ENCODE measurements at regions of chr19 and their contacts with region 1.

Region 1: GRCh38 chr19:56252699-56253422 is 19.7 kb upstream of the EDDM13 start:
- DNase-seq: peak; percentile 73 to 98
- H3K4me3 ChIP-seq: no peak overlapping the region; a peak in 1 of 8 replicates
- H3K27ac ChIP-seq: no peak overlapping the region
- H3K4me1 ChIP-seq: no peaks in the 10 kb centered on the region
- H3K27me3 ChIP-seq: no peaks in the 10 kb centered on the region; a peak in 1 of 7 replicates
- CTCF ChIP-seq: peak; percentile 90 to 97 (median 97)
- EP300 ChIP-seq: no peak
- POLR2A ChIP-seq: no peak
- RAD21 ChIP-seq: peak; percentile 79 to 81

Region 2: DNA sequence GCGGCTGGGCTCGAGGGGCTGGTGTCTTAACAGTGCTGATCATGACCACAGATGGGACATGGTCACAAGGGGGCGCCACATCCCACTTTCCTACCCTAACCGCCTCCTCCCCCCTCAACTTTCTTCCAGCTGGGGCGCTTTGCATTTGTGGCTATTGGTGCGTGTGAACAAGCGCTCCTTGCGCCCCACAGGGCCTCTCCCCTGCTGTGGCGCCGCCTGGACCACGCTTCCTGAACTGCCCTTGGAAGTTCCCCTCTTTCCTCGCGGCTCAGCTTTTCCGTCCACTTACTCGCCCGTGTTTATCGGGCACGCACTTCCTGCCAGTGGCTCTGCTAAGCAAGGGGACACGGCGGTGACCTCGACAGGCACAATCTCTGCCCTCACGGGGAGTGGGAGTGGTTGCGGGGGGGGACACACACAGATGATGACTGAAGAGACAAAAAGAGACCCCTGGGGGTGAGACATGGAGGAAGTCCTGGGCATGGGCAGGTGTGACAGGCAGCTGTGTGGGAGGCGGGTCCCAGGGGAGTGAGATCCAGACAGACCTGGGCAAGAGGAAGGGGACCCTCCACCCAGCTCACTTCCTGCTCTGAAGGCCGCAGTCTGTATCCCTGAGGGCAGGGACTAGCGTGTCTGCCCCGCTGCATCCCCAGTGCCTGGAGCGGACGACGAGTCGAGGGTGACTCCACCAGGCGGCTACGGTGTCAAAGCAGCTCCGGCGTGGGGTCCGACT is 172.0 kb before region 1 on chr19:
- CTCF ChIA-PET with region 1: interaction called, 11 read pairs
- POLR2A ChIA-PET with region 1: no interaction called
- DNase-seq: peak in 1 of 2 experiments; percentile 94
- H3K4me3 ChIP-seq: peak overlapping the region; percentile 38 to 74 (median 46); a peak in 7 of 8 replicates
- H3K27ac ChIP-seq: no peak overlapping the region
- H3K4me1 ChIP-seq: peaks cover 0 to 14% (median 6%) of the 10 kb centered on the region in 4 experiments; a peak in 6 of 7 replicates
- H3K27me3 ChIP-seq: no peaks in the 10 kb centered on the region
- CTCF ChIP-seq: peak; percentile 70 to 86 (median 72)
- EP300 ChIP-seq: peak in 1 of 2 experiments; percentile 16; a peak in 1 of 3 replicates
- POLR2A ChIP-seq: no peak
- RAD21 ChIP-seq: peak; percentile 58 to 65

Region 3: GRCh38 chr19:56121180-56122167 is 131.4 kb before region 1 on chr19 and contains the start of gene ZNF787:
- CTCF ChIA-PET with region 1: no interaction called
- POLR2A ChIA-PET with region 1: no interaction called
- DNase-seq: peak; percentile 97 to 99
- H3K4me3 ChIP-seq: peak within 1 kb of the TSS; percentile 75 to 91 (median 77)
- H3K27ac ChIP-seq: peak within 1 kb of the TSS; percentile 85
- H3K4me1 ChIP-seq: peaks cover 0 to 16% (median 12%) of the 10 kb centered on the region in 4 experiments; a peak in 6 of 7 replicates
- H3K27me3 ChIP-seq: no peaks in the 10 kb centered on the region; a peak in 1 of 7 replicates
- CTCF ChIP-seq: no peak
- EP300 ChIP-seq: no peak
- POLR2A ChIP-seq: peak; percentile 45 to 46; a peak in 2 of 3 replicates
- RAD21 ChIP-seq: no peak
- total RNA-seq, gene ZNF787: 56.0 and 57.3 TPM in 2 replicates

Region 4: GRCh38 chr19:56170261-56170660 is 82.6 kb before region 1 on chr19:
- CTCF ChIA-PET with region 1: interaction called, 15 read pairs
- POLR2A ChIA-PET with region 1: no interaction called
- DNase-seq: no peak
- H3K4me3 ChIP-seq: no peak overlapping the region
- H3K27ac ChIP-seq: no peak overlapping the region
- H3K4me1 ChIP-seq: no peaks in the 10 kb centered on the region
- H3K27me3 ChIP-seq: no peaks in the 10 kb centered on the region
- CTCF ChIP-seq: no peak
- EP300 ChIP-seq: no peak
- POLR2A ChIP-seq: no peak
- RAD21 ChIP-seq: no peak

Region 5: DNA sequence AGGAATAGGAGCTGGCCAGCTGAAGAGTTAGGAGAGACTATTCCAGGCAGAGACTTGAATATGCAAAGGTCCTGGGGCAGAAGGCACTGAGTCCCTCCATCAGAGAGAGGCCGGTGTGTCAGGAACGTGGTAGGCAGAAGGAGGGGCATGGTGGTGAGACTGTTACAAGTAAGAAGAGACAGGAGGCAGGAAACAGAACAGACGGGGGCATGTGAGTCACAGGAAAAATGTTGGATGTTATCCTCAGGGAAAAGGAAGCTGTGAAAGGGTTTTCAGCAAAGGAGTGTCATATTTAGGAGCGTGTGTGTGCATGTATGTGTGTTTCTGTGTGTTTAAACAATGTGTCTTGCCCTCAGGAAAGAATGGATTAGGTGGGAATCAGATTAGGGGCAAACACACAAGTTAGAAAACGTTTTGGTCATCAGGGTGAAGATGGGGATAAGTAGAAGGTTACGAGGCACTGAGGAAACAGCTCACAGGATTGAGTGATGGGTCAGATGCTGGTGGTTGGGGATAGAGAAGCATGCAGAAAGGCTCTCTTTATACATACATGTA is 20.8 kb after region 1 on chr19:
- CTCF ChIA-PET with region 1: interaction called, 10 read pairs
- POLR2A ChIA-PET with region 1: no interaction called
- DNase-seq: no peak
- H3K4me3 ChIP-seq: no peak overlapping the region
- H3K27ac ChIP-seq: no peak overlapping the region
- H3K4me1 ChIP-seq: no peaks in the 10 kb centered on the region
- H3K27me3 ChIP-seq: no peaks in the 10 kb centered on the region
- CTCF ChIP-seq: no peak
- EP300 ChIP-seq: no peak
- POLR2A ChIP-seq: no peak
- RAD21 ChIP-seq: no peak

Region 6: GRCh38 chr19:56314562-56315077 is 61.8 kb after region 1 on chr19 and contains the start of gene ZSCAN5A:
- CTCF ChIA-PET with region 1: interaction called, 18 read pairs
- POLR2A ChIA-PET with region 1: no interaction called
- DNase-seq: peak; percentile 66 to 95
- H3K4me3 ChIP-seq: peak within 1 kb of the TSS; percentile 71 to 99 (median 90)
- H3K27ac ChIP-seq: peak within 1 kb of the TSS; percentile 98
- H3K4me1 ChIP-seq: peaks cover 0 to 3% (median 1%) of the 10 kb centered on the region in 4 experiments; a peak in 2 of 7 replicates
- H3K27me3 ChIP-seq: no peaks in the 10 kb centered on the region
- CTCF ChIP-seq: peak in 1 of 3 experiments; percentile 11; a peak in 1 of 4 replicates
- EP300 ChIP-seq: no peak
- POLR2A ChIP-seq: peak in 1 of 2 experiments; percentile 82; a peak in 2 of 3 replicates
- RAD21 ChIP-seq: no peak
- total RNA-seq, gene ZSCAN5A: 11.0 and 15.0 TPM in 2 replicates

Region 7: DNA sequence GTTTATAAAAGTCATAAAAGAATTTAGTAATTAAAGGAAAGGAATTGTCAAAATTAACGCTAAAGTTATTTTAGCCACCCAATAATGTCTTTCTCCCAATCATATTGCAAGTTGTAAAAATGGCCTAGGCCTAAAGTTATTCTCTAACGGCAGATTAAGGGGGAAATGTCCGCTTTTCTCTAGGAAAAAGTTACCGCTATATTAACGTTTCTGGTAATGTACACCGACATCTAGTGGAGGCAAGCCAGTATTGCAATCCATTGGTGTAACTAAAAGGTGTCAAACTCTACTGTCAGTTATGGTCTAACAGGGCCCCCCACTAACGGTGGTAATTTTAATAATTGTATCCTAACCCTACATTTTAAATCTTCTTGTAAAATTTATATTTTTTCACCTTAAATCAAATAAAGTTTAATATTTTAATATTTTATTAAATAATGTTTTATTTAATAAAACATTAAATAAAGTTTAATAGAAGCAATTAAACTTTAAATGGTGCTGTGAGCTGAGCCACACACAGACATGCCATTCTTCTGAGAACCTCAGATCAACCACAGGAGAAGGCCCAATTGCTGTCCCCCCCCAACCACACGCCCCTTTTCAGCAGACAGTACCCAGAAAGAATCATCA is 97.7 kb after region 1 on chr19:
- CTCF ChIA-PET with region 1: interaction called, 21 read pairs
- POLR2A ChIA-PET with region 1: no interaction called
- DNase-seq: peak in 1 of 2 experiments; percentile 52
- H3K4me3 ChIP-seq: no peak overlapping the region
- H3K27ac ChIP-seq: no peak overlapping the region
- H3K4me1 ChIP-seq: peaks cover 0 to 6% (median 4%) of the 10 kb centered on the region in 4 experiments; a peak in 6 of 7 replicates
- H3K27me3 ChIP-seq: no peaks in the 10 kb centered on the region; a peak in 1 of 7 replicates
- CTCF ChIP-seq: peak in 2 of 3 experiments; percentile 60 to 74; a peak in 3 of 4 replicates
- EP300 ChIP-seq: no peak
- POLR2A ChIP-seq: no peak
- RAD21 ChIP-seq: peak; percentile 71 to 76

Measured in H1 (cell line).